HEK293 (cell line): ENCODE measurements at regions of chr15 and their contacts with region 1.

Region 1: DNA sequence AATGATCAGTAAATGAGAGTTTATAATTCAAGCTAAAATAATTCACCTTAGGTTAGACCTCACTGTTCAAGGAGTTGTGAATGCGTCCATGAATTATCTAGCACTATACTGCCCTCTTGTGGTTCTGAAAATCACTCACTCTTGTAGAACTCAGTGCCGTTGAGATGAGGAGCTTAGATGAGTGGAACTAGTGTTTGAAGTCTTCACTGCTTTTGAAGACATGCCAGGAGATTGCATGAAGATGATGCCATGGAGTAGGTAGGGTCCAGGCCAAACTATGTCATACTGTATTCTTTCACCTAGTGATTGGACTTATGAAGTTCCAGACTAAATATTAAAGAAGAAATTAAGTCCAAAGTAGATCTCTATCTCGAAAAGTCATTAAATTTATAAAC is 28.8 kb downstream of the LYSMD4 start:
- H3K4me3 ChIP-seq: no peak overlapping the region
- H3K27ac ChIP-seq: no peak overlapping the region
- H3K4me1 ChIP-seq: peaks cover 7% of the 10 kb centered on the region
- CTCF ChIP-seq: peak; percentile 38; the same call in 1 of the 2 replicates

Region 2: DNA sequence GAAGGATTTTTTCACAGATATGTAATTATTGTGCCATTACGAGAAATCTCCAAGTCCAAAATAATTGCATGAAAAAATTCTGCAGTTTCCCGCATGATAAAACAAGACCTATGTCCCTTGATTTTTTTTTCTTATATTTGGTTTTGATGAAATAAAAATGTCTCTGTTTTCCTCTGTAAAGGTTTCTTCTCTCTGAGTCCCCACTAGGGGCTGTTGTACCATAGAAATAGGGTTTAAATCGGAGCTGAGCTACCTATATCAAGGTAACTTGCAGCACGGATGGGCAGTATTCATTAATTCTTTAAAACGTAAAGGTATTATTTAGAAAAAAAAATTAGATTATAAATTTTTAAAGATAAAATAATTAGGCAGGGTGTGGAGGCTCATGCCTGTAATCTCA is 1122.7 kb before region 1 on chr15:
- CTCF ChIA-PET with region 1: no interaction called
- POLR2A ChIA-PET with region 1: no interaction called
- H3K4me3 ChIP-seq: no peak overlapping the region
- H3K27ac ChIP-seq: no peak overlapping the region
- H3K4me1 ChIP-seq: peaks cover 21% of the 10 kb centered on the region
- CTCF ChIP-seq: no peak

Region 3: DNA sequence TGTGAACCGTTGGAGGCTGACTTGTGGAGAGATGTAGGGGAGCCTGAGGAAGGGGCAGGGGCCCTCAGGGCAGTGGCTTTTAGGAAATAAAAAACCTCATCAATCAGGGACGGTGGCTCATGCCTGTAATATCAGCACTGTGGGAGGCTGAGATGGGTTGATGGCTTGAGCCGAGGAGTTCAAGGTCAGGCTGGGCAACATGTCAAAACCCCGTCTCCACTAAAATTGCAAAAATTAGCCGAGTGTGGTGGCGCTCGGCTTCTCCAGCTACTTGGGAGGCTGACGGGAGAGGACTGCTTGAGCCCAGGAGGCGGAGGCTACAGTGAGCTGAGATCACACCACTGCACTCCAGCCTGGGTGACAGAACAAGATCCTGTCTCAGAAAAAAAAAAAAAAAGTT is 462.7 kb before region 1 on chr15:
- CTCF ChIA-PET with region 1: interaction called, 10 read pairs
- POLR2A ChIA-PET with region 1: no interaction called
- H3K4me3 ChIP-seq: no peak overlapping the region
- H3K27ac ChIP-seq: no peak overlapping the region
- H3K4me1 ChIP-seq: no peaks in the 10 kb centered on the region
- CTCF ChIP-seq: no peak

Region 4: GRCh38 chr15:99282121-99282520 is 422.3 kb before region 1 on chr15:
- CTCF ChIA-PET with region 1: interaction called, 83 read pairs
- POLR2A ChIA-PET with region 1: no interaction called
- H3K4me3 ChIP-seq: no peak overlapping the region
- H3K27ac ChIP-seq: no peak overlapping the region
- H3K4me1 ChIP-seq: no peaks in the 10 kb centered on the region
- CTCF ChIP-seq: no peak

Region 5: DNA sequence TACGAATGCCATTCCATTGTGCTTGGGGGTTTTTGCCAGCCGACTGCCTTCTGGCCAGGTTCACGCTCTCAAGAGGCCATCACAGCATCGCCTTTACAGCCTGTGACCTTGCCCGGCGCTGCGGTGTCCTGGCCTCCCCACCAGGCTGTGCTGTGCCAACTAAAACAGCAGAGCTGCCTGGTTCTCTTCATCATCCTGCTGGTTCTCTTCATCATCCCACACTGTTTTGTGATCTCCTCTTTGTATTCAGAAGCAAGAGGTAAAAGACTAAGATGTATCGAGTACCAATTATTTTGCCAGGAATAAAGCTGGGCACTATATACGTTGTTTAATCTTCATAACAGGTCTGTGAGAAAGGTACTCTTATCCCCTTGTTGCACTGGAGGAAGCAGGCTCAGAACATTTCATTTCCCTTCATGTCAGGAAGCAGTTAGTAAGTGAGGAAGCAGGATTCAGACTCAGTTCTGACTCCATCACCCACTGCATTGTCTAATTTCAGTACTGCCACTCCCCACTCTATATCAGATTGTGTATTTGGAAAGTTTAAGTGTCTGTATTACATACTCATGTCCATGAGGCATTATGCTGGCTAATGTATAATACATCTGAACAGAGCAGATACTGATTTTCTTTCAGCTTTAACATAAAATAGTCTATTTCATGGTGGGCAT is 360.4 kb before region 1 on chr15:
- CTCF ChIA-PET with region 1: interaction called, 13 read pairs
- POLR2A ChIA-PET with region 1: no interaction called
- H3K4me3 ChIP-seq: no peak overlapping the region
- H3K27ac ChIP-seq: no peak overlapping the region
- H3K4me1 ChIP-seq: no peaks in the 10 kb centered on the region
- CTCF ChIP-seq: no peak

Region 6: GRCh38 chr15:99565299-99566156 is 138.9 kb before region 1 on chr15 and contains the start of gene MEF2A:
- CTCF ChIA-PET with region 1: interaction called, 29 read pairs
- POLR2A ChIA-PET with region 1: interaction called, 14 read pairs
- H3K4me3 ChIP-seq: peak within 1 kb of the TSS; percentile 86
- H3K27ac ChIP-seq: peak within 1 kb of the TSS; percentile 94
- H3K4me1 ChIP-seq: peaks cover 24% of the 10 kb centered on the region
- CTCF ChIP-seq: no peak

Region 7: GRCh38 chr15:99692825-99693224 is 11.6 kb before region 1 on chr15:
- CTCF ChIA-PET with region 1: interaction called, 20 read pairs
- POLR2A ChIA-PET with region 1: no interaction called
- H3K4me3 ChIP-seq: no peak overlapping the region
- H3K27ac ChIP-seq: no peak overlapping the region
- H3K4me1 ChIP-seq: no peaks in the 10 kb centered on the region
- CTCF ChIP-seq: no peak

Region 8: GRCh38 chr15:99755692-99756409 is 51.4 kb after region 1 on chr15:
- CTCF ChIA-PET with region 1: interaction called, 62 read pairs
- POLR2A ChIA-PET with region 1: no interaction called
- H3K4me3 ChIP-seq: no peak overlapping the region
- H3K27ac ChIP-seq: no peak overlapping the region
- H3K4me1 ChIP-seq: no peaks in the 10 kb centered on the region
- CTCF ChIP-seq: peak; percentile 65

Region 9: DNA sequence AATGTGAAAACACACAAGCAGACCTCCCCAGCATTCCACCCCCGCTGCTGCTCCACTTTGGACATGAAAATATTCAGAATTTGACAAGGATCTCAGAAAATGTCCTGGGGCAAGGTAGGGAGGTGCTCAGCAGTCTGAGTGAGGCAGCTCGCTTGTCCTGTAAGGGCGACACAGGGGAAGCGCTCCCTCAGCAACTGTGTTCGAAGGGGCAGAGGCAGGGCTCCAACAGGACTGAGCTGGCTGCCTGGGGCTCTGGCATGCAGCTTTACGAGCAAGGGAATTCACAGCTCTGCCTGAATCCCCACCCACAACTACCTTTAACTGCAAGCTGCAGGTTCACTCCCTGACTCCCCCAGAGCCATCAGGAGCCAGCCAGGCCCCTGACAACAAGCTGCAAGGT is 315.7 kb after region 1 on chr15:
- CTCF ChIA-PET with region 1: no interaction called
- POLR2A ChIA-PET with region 1: no interaction called
- H3K4me3 ChIP-seq: no peak overlapping the region
- H3K27ac ChIP-seq: no peak overlapping the region
- H3K4me1 ChIP-seq: no peaks in the 10 kb centered on the region
- CTCF ChIP-seq: no peak